BJ (cell line): ENCODE measurements at regions of chr21 and their contacts with region 1.

Region 1: GRCh38 chr21:21915816-21916215 is 917.6 kb downstream of the NCAM2 start:
- DNase-seq: no peak
- H3K4me3 ChIP-seq: no peak overlapping the region
- H3K27me3 ChIP-seq: no peaks in the 10 kb centered on the region
- CTCF ChIP-seq: no peak

Region 2: DNA sequence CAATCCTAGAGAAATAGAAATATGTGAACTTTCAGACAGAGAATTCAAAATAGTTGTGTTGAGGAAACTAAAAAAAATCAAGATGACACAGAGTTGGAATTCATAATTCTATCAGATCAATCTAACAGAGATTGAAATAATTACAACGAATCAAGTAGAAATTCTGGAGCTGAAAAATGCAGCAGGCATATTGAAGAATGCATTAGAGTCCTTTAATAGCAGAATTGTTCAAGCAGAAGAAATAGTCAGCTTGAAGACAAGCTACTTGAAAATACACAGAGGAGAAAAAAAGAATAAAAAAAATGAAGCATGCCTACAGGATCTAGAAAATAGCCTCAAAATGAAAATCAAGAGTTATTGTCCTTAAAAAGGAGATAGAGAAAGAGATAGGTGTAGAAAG is 570.5 kb before region 1 on chr21:
- CTCF ChIA-PET with region 1: no interaction called
- POLR2A ChIA-PET with region 1: interaction called, 12 read pairs
- DNase-seq: no peak
- H3K4me3 ChIP-seq: no peak overlapping the region
- H3K27me3 ChIP-seq: no peaks in the 10 kb centered on the region
- CTCF ChIP-seq: no peak